ENCODE measurements at regions of chr17 and their contacts with region 1.

Region 1: GRCh38 chr17:44199553-44200477 is at the start of gene ATXN7L3:
- DNase-seq: peak; percentile 100
- H3K4me3 ChIP-seq: peak within 1 kb of the TSS; percentile 78 to 99 (median 94)
- H3K27ac ChIP-seq: peak within 1 kb of the TSS; percentile 97 to 99 (median 98)
- H3K4me1 ChIP-seq: peaks cover 0 to 36% (median 28%) of the 10 kb centered on the region in 4 donors
- H3K27me3 ChIP-seq: no peaks in the 10 kb centered on the region
- CTCF ChIP-seq: no peak
- EP300 ChIP-seq: no peak
- POLR2A ChIP-seq: no peak
- total RNA-seq, gene ATXN7L3: 26.4 to 37.4 (median 35.0) TPM

Region 2: GRCh38 chr17:44186307-44187130 is 13.3 kb before region 1 on chr17 and contains the start of gene TMUB2:
- intact Hi-C with region 1: loop called (anchors 1 kb)
- DNase-seq: peak; percentile 99
- H3K4me3 ChIP-seq: peak within 1 kb of the TSS; percentile 60 to 94 (median 74)
- H3K27ac ChIP-seq: peak within 1 kb of the TSS; percentile 89 to 99 (median 94)
- H3K4me1 ChIP-seq: peaks cover 0 to 35% (median 27%) of the 10 kb centered on the region in 4 donors
- H3K27me3 ChIP-seq: no peaks in the 10 kb centered on the region
- CTCF ChIP-seq: no peak
- EP300 ChIP-seq: peak in 2 of 4 donors; percentile 24 to 65
- POLR2A ChIP-seq: peak; percentile 60 to 81
- total RNA-seq, gene TMUB2: 26.9 to 40.3 (median 29.2) TPM